ENCODE measurements at regions of chr7 and their contacts with region 1.

Region 1: DNA sequence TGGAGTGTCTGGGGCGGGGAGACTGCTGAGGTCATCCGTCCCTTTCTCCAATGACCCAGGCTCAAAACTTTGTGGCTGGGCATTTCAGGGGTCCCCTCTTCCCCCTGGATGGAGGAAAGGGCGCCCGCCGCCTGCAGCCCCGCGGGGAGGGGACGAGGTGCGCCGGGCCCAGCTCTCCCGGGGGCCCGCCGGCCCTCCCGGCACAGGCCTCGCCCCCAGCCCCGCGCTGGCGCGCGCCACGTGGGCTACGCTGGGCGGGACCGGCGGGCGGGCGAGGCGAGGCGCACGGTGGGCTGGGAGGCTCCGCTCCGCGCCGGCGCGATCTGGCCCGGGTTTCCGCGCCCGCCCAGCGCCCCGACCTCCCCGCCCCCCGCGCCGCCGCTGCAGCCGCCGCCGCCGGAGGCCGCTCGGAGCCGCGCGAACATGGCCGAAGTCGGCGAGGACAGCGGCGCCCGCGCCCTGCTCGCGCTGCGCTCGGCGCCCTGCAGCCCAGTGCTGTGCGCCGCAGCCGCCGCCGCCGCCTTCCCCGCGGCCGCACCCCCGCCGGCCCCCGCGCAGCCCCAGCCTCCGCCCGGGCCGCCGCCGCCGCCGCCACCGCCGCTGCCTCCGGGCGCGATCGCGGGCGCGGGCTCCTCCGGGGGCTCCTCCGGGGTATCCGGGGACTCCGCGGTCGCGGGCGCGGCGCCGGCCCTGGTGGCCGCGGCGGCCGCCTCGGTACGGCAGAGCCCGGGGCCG is at the start of gene FOXK1:
- DNase-seq: no peak
- ATAC-seq: peak; percentile 78
- H3K4me3 ChIP-seq: peak within 1 kb of the TSS; percentile 91 to 94
- H3K27ac ChIP-seq: peak within 1 kb of the TSS; percentile 91
- H3K4me1 ChIP-seq: peaks cover 10 to 30% of the 10 kb centered on the region in 2 experiments
- H3K27me3 ChIP-seq: no peaks in the 10 kb centered on the region
- CTCF ChIP-seq: no peak
- POLR2A ChIP-seq: peak; percentile 59
- RAD21 ChIP-seq: no peak
- total RNA-seq, gene FOXK1: 60.5 TPM

Region 2: GRCh38 chr7:4268115-4268965 is 413.7 kb before region 1 on chr7:
- CTCF ChIA-PET with region 1: no interaction called
- POLR2A ChIA-PET with region 1: no interaction called
- RAD21 ChIA-PET with region 1: no interaction called
- intact Hi-C with region 1: no loop called
- DNase-seq: no peak
- ATAC-seq: no peak
- H3K4me3 ChIP-seq: no peak overlapping the region
- H3K27ac ChIP-seq: no peak overlapping the region
- H3K4me1 ChIP-seq: no peaks in the 10 kb centered on the region
- H3K27me3 ChIP-seq: no peaks in the 10 kb centered on the region; the same call in 1 of the 2 replicates
- CTCF ChIP-seq: no peak
- POLR2A ChIP-seq: no peak
- RAD21 ChIP-seq: no peak

Region 3: GRCh38 chr7:4744391-4745264 is 62.6 kb after region 1 on chr7:
- CTCF ChIA-PET with region 1: no interaction called
- POLR2A ChIA-PET with region 1: no interaction called
- RAD21 ChIA-PET with region 1: no interaction called
- intact Hi-C with region 1: loop called (anchors 2 kb)
- DNase-seq: peak; percentile 85
- ATAC-seq: peak; percentile 99
- H3K4me3 ChIP-seq: peak overlapping the region in 1 of 2 experiments; percentile 23; a peak in 2 of 4 replicates
- H3K27ac ChIP-seq: peak overlapping the region; percentile 61
- H3K4me1 ChIP-seq: peaks cover 21 to 32% of the 10 kb centered on the region in 2 experiments
- H3K27me3 ChIP-seq: no peaks in the 10 kb centered on the region
- CTCF ChIP-seq: no peak
- POLR2A ChIP-seq: no peak
- RAD21 ChIP-seq: no peak